ENCODE measurements at regions of chr15 and their contacts with region 1.

Region 1: DNA sequence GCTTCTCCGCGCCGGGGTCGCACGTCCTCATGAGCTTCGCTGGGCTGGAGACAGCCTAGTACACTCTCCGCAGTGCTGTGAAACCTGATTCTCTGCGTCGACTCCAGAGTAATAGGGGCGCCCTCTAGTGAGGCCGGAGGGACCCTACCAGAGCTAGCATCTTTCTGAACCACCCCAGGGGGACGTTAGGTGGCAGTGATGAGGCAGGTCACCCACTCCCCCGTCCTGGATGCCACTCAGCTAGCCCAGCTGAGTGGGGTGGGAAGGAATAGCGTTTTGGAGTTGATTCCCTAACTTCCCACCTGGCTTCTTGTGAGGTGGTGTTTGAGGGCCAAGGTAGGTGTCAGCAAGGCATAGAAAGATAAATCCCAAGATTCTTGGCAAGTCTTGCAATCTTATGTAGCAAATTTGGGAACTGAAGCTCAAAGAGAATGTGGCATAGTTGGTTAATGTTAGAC is 4.0 kb downstream of the DUOXA2 start:
- DNase-seq: peak; percentile 89 to 94 (median 91)
- H3K4me3 ChIP-seq: peak overlapping the region in 4 of 7 experiments; percentile 10 to 58 (median 56)
- H3K27ac ChIP-seq: no peak overlapping the region
- H3K4me1 ChIP-seq: peaks cover 0 to 34% (median 18%) of the 10 kb centered on the region in 4 experiments
- H3K27me3 ChIP-seq: peaks cover 0 to 67% (median 49%) of the 10 kb centered on the region in 5 experiments

Region 2: DNA sequence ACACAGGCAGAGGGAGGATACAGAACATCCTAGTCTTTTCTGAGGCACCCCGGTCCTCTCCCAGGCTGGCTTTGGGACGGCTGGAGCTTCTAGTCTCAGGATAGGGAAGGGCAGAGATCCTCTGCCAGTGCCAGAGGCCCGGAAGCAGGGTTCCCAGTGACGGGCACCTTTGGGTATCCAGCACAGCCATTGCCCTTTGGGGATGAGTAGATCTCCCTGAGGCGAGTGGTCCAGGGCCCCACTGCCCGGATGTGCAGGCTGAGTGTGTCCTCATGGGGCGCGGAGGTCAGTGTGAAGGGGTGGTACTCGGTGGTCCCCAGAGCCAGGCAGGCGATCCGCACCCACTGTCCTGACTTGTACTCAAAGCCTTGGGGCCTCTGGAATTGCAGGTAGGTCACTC is 22.5 kb before region 1 on chr15:
- CTCF ChIA-PET with region 1: interaction called, 10 read pairs
- POLR2A ChIA-PET with region 1: no interaction called
- DNase-seq: no peak
- H3K4me3 ChIP-seq: no peak overlapping the region
- H3K27ac ChIP-seq: no peak overlapping the region
- H3K4me1 ChIP-seq: no peaks in the 10 kb centered on the region
- H3K27me3 ChIP-seq: peaks cover 0 to 4% (median 3%) of the 10 kb centered on the region in 5 experiments

Region 3: GRCh38 chr15:45129651-45130191 is 11.6 kb after region 1 on chr15 and contains the starts of genes DUOX1 and DUOXA1:
- CTCF ChIA-PET with region 1: interaction called, 13 read pairs
- POLR2A ChIA-PET with region 1: no interaction called
- DNase-seq: peak in 2 of 3 donors; percentile 23 to 33
- H3K4me3 ChIP-seq: peak within 1 kb of the TSS in 4 of 7 experiments; percentile 23 to 61 (median 46)
- H3K27ac ChIP-seq: no peak within 1 kb of the TSS
- H3K4me1 ChIP-seq: peaks cover 0 to 10% (median 5%) of the 10 kb centered on the region in 4 experiments
- H3K27me3 ChIP-seq: peaks cover 5 to 88% (median 46%) of the 10 kb centered on the region in 5 experiments